Activated T-helper 2 cell treated with anti-CD3 and anti-CD28 coated beads, Interferon-gamma antibody, Interleukin-2, Interleukin-4, amounts not matched to agents 10 μg/mL and 5 μg/mL and 100 μg/mL, durations not matched to agents 14 hours and 24 hours and 36 hours (primary cell): ENCODE measurements at regions of chr20 and their contacts with region 1.

Region 1: GRCh38 chr20:50509935-50510705 is at the start of gene PTPN1:
- DNase-seq: peak; percentile 99
- H3K4me3 Mint-ChIP-seq: peak within 1 kb of the TSS; percentile 93
- H3K27ac Mint-ChIP-seq: peak within 1 kb of the TSS; percentile 86
- H3K4me1 Mint-ChIP-seq: peaks cover 43% of the 10 kb centered on the region
- H3K27me3 Mint-ChIP-seq: no peaks in the 10 kb centered on the region
- total RNA-seq, gene PTPN1: 93.2 and 94.6 TPM in 2 replicates

Region 2: DNA sequence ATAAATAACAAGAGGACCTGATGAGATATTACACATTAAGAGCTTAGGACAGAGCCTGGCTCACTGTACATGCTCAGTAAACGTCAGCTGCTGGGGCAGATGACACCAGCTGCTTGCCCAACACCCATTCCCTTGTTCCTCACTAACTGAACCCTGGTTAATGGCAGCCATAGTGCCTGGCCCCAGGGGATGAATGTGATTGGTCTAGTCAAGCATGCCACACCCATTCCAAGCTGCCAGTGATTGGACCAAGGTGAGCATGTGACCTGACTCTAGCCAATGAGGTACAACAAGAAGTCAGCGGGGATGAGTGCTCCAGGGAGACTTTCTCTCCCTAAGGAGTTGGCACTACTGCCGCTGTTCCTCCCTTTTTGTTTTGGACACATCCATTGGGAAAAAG is 85.0 kb before region 1 on chr20:
- intact Hi-C with region 1: no loop called
- DNase-seq: no peak
- H3K4me3 Mint-ChIP-seq: no peak overlapping the region
- H3K27ac Mint-ChIP-seq: no peak overlapping the region
- H3K4me1 Mint-ChIP-seq: no peaks in the 10 kb centered on the region
- H3K27me3 Mint-ChIP-seq: peaks cover 8% of the 10 kb centered on the region

Region 3: DNA sequence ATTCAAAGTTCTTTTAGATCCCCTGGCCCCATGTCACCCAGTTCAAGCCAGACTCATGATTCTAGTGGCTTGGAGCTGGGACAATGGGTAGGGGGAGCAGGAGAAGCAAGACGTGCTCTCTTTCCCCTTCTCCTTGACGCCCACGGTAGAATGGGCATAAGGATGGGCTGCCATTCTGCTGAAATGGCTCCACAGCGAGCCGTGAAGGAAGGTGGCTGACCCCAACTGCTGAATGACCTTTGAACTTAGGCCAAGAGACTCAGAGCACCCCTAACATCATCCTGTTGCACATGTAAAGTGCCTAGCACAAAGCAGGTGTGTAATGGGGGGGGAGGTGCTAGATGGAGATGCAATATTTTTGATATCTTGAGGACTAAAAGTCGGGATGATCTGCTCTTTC is 15.7 kb before region 1 on chr20:
- intact Hi-C with region 1: no loop called
- DNase-seq: no peak
- H3K4me3 Mint-ChIP-seq: no peak overlapping the region
- H3K27ac Mint-ChIP-seq: no peak overlapping the region
- H3K4me1 Mint-ChIP-seq: peaks cover 24% of the 10 kb centered on the region
- H3K27me3 Mint-ChIP-seq: no peaks in the 10 kb centered on the region

Region 4: DNA sequence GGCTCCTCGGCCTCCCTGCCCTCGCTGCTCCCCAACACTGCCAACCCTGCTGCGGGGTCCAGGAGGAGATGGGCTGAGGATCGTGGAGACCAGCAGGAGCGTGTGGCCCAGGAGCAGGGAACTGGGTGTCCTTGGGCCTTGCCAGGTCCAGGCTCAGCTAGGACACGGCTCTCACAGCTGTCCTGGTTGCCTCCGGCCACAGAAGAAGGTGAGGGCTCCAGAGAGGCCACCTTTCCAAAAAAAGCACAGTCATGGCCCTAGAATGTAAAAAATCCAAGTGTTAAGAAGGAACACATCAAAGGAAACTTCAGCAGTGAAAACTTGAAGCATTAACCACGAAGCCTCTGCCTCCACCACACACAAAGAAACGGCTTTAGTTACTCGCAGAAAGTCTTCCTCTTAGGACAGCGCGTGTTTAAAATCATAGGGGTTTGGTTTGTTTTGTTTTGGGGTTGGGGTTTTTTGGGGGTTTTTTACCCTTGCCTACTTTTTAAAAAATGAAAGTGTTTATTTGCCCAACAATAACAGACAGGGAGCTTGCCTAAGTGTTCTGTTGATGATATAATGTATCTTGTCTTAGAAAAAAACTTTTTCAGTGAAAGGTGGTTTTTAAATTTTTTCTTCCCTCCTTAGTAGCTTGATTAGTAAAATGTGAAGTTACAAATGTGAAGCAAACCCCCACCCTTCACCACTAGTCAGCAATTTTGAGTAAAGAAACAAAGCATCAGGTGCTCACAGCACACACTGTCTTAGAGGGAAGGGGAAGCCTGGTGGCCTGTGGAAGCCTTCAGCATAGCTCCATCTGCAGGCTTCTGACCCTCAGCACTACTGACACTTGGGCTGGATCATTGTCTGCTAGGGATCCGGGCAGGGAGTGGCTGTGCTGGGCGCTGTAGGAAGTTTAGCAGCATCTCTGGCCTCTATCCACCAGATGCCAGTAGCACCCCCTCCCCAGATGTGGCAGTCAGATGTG is 60.0 kb after region 1 on chr20:
- intact Hi-C with region 1: loop called (anchors 1 kb)
- DNase-seq: peak; percentile 40
- H3K4me3 Mint-ChIP-seq: peak overlapping the region; percentile 34
- H3K27ac Mint-ChIP-seq: peak overlapping the region; percentile 85
- H3K4me1 Mint-ChIP-seq: peaks cover 59% of the 10 kb centered on the region
- H3K27me3 Mint-ChIP-seq: no peaks in the 10 kb centered on the region